CD4-positive, alpha-beta memory T cell (primary cell): ENCODE measurements at regions of chr17 and their contacts with region 1.

Region 1: GRCh38 chr17:44014437-44015172 is at the start of gene TMEM101:
- DNase-seq: peak; percentile 85 to 92 (median 87)
- H3K4me3 ChIP-seq: peak within 1 kb of the TSS; percentile 92 to 98
- H3K4me3 Mint-ChIP-seq: peak within 1 kb of the TSS; percentile 99 to 100 (median 100)
- H3K27ac ChIP-seq: peak within 1 kb of the TSS; percentile 71
- H3K27ac Mint-ChIP-seq: peak within 1 kb of the TSS; percentile 84 to 99 (median 97)
- H3K4me1 ChIP-seq: peaks cover 16% of the 10 kb centered on the region
- H3K4me1 Mint-ChIP-seq: peaks cover 6 to 13% (median 10%) of the 10 kb centered on the region in 4 donors
- H3K27me3 ChIP-seq: no peaks in the 10 kb centered on the region
- H3K27me3 Mint-ChIP-seq: no peaks in the 10 kb centered on the region
- total RNA-seq, gene TMEM101: 27.3 to 30.0 TPM

Region 2: GRCh38 chr17:43878260-43879175 is 136.1 kb before region 1 on chr17:
- CTCF ChIA-PET with region 1: no interaction called
- POLR2A ChIA-PET with region 1: no interaction called
- intact Hi-C with region 1: no loop called
- DNase-seq: peak in 4 of 5 donors; percentile 35 to 55 (median 45)
- H3K4me3 ChIP-seq: no peak overlapping the region
- H3K4me3 Mint-ChIP-seq: peak overlapping the region in 1 of 8 donors; percentile 43
- H3K27ac ChIP-seq: no peak overlapping the region
- H3K27ac Mint-ChIP-seq: no peak overlapping the region
- H3K4me1 ChIP-seq: no peaks in the 10 kb centered on the region
- H3K4me1 Mint-ChIP-seq: peaks cover 0 to 4% (median 0%) of the 10 kb centered on the region in 4 donors
- H3K27me3 ChIP-seq: no peaks in the 10 kb centered on the region
- H3K27me3 Mint-ChIP-seq: peaks cover 0 to 2% of the 10 kb centered on the region in 2 donors

Region 3: GRCh38 chr17:44070455-44071197 is 56.0 kb after region 1 on chr17 and contains the start of gene G6PC3:
- CTCF ChIA-PET with region 1: no interaction called
- POLR2A ChIA-PET with region 1: interaction called, 5 read pairs
- intact Hi-C with region 1: loop called (anchors 2 kb)
- DNase-seq: peak; percentile 56 to 76 (median 64)
- H3K4me3 ChIP-seq: peak within 1 kb of the TSS; percentile 69 to 79
- H3K4me3 Mint-ChIP-seq: peak within 1 kb of the TSS; percentile 90 to 97 (median 94)
- H3K27ac ChIP-seq: peak within 1 kb of the TSS; percentile 78
- H3K27ac Mint-ChIP-seq: peak within 1 kb of the TSS; percentile 83 to 98 (median 96)
- H3K4me1 ChIP-seq: peaks cover 33% of the 10 kb centered on the region
- H3K4me1 Mint-ChIP-seq: peaks cover 22 to 50% (median 34%) of the 10 kb centered on the region in 4 donors
- H3K27me3 ChIP-seq: no peaks in the 10 kb centered on the region
- H3K27me3 Mint-ChIP-seq: no peaks in the 10 kb centered on the region
- total RNA-seq, gene G6PC3: 10.6 to 11.8 TPM

Region 4: GRCh38 chr17:44503147-44504029 is 488.8 kb after region 1 on chr17 and contains the start of gene GPATCH8:
- CTCF ChIA-PET with region 1: no interaction called
- POLR2A ChIA-PET with region 1: interaction called, 3 read pairs
- intact Hi-C with region 1: loop called (anchors 10 kb)
- DNase-seq: peak; percentile 90 to 95 (median 94)
- H3K4me3 ChIP-seq: peak within 1 kb of the TSS; percentile 73 to 80
- H3K4me3 Mint-ChIP-seq: peak within 1 kb of the TSS; percentile 83 to 99 (median 98)
- H3K27ac ChIP-seq: peak within 1 kb of the TSS; percentile 90
- H3K27ac Mint-ChIP-seq: peak within 1 kb of the TSS; percentile 92 to 98 (median 97)
- H3K4me1 ChIP-seq: peaks cover 49% of the 10 kb centered on the region
- H3K4me1 Mint-ChIP-seq: peaks cover 23 to 52% (median 41%) of the 10 kb centered on the region in 4 donors
- H3K27me3 ChIP-seq: no peaks in the 10 kb centered on the region
- H3K27me3 Mint-ChIP-seq: peaks cover 0 to 2% of the 10 kb centered on the region in 2 donors
- total RNA-seq, gene GPATCH8: 69.8 to 70.6 TPM